Activated CD4-positive, alpha-beta T cell treated with anti-CD3 and anti-CD28 coated beads, Interleukin-2, amount 10 ng/mL, durations not matched to agents 24 days and 14 days (primary cell): ENCODE measurements at regions of chr15 and their contacts with region 1.

Region 1: DNA sequence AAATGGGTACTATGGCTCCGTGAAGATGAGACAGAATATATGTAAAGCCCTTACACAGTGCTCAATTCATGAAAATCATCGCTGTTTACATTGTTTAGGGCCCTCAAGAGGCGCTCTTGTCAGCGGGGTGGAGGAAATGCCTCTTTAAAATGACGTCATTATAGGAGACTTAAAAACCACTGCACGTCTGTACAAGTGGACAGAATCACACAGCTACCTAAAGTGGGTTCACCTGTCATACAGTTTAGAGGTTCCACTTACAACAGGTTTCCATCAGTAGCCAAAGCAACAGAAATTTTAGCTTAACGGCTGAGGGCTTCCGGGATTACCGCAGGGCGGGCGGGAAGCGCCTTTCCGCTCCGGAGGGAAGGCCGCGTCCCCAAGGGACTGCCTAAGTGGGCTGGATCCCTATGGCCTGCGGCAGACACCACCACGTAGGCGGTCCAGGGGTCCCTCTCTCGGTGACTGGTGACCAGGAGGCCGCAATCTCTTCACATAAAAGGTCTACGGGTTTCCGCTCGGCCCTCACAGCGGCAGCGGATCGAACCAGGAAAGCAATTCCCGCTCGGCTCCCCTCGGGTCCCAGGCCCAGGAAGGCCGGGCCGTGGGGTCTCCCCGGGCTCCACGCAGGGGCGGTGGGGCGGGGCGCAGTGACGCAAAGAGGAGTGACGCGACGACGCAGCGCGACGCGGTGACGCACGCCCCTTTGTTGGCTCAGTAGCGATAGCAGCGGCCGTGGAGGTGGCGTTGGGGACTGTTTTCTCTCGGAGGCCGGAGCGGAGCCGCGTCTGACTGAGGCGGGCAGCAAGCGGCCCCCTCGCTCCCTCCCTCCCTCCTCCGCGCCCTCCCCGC is at the start of gene ARIH1:
- DNase-seq: peak; percentile 99
- H3K4me3 Mint-ChIP-seq: peak within 1 kb of the TSS; percentile 91
- H3K27ac Mint-ChIP-seq: peak within 1 kb of the TSS; percentile 99
- H3K4me1 Mint-ChIP-seq: peaks cover 31% of the 10 kb centered on the region
- H3K27me3 Mint-ChIP-seq: no peaks in the 10 kb centered on the region
- total RNA-seq, gene ARIH1: 140 and 141 TPM in 2 replicates

Region 2: DNA sequence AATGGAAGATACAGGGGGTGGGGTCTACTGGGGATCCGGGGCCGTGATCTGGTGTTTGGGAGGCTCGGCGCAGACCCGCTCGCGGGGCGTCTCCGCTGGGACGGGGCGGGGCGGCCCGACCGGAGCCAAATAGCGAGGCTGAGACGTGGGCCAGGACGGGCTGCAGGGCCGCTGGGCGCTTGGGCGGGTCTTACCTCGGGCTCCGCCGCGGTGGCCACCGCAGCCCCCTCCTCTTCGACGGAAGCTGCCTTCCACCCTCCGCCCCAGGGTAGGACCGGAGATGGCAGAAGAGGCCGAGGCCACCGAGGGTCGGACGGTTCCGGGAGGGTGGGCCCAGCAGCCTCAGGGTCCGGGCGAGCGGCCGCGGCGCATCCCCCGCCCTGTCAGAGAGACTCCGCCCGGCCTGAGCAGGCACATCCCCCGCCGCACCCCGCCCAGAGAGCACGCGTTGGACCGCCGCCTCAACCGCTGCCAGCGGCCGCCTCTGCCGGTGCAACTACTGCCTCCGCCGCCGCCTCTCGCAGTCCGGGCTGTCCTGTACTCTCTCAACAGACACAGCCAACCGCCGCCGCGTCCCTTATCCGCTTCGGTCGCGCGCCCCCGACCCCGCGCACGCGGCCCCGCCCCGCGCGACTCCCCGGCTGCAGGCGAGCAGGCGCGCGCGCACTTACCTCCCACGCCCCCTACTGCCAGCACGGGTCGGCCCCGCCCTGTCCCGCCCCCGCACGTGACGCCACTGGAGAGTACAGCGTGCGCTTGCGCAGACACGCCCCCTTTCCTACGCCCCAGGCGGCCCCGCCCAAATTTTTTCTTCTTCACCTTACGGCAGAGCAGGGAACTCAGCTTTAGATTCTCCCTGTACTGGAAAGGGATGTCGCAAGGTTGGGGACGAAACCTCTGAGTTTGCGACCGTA is 356.1 kb before region 1 on chr15 and contains the start of gene MYO9A:
- intact Hi-C with region 1: loop called (anchors 10 kb)
- DNase-seq: peak; percentile 98
- H3K4me3 Mint-ChIP-seq: peak within 1 kb of the TSS; percentile 95
- H3K27ac Mint-ChIP-seq: peak within 1 kb of the TSS; percentile 99
- H3K4me1 Mint-ChIP-seq: peaks cover 26% of the 10 kb centered on the region
- H3K27me3 Mint-ChIP-seq: peaks cover 17% of the 10 kb centered on the region
- total RNA-seq, gene MYO9A: 19.4 and 21.3 TPM in 2 replicates

Region 3: DNA sequence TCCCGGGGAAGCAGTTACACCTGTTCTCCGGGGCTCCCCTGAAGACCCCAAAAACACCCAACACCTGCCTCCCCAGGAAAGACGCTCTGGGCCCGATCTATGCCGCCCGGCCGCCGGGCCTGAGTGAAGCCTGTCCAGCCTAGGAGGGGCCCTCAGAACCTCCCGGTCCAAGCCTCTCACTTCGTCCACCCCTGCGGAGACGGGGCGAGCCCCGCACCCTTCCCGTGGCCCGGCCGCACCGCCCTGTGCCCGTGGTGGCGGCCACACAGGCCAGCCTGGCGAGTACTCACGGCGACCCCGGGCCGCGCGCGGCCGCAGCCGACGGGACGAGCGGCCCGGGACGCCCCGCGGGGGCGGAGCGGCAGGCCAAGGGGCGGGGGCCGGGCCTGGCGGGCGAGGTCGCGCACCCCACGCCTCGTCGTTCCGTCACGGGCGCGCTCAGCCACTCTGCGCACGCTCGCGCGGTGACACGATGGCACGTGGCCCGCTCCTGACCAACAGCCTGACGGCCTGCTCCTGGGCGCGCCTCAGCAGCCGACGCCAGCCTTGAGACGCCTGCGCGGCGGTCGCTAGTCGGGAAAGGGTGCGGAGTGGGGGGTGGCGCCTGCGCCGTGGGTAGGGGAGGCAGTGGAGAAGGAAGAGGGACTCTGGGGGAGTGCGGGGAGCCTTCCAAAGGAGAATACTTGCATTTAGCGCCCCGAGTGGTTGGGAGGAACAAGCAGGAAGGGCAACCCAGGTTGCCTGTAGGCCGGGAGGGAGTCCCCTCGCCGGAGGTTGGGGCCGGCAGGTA is 201.4 kb before region 1 on chr15 and contains the start of gene PARP6:
- intact Hi-C with region 1: loop called (anchors 1 kb)
- DNase-seq: peak; percentile 100
- H3K4me3 Mint-ChIP-seq: peak within 1 kb of the TSS; percentile 94
- H3K27ac Mint-ChIP-seq: peak within 1 kb of the TSS; percentile 88
- H3K4me1 Mint-ChIP-seq: peaks cover 32% of the 10 kb centered on the region
- H3K27me3 Mint-ChIP-seq: peaks cover 3% of the 10 kb centered on the region
- total RNA-seq, gene PARP6: 69.7 and 78.6 TPM in 2 replicates

Region 4: GRCh38 chr15:72375847-72376581 is 97.8 kb before region 1 on chr15 and contains the start of gene HEXA:
- intact Hi-C with region 1: loop called (anchors 1 kb)
- DNase-seq: peak; percentile 99
- H3K4me3 Mint-ChIP-seq: peak within 1 kb of the TSS; percentile 90
- H3K27ac Mint-ChIP-seq: peak within 1 kb of the TSS; percentile 91
- H3K4me1 Mint-ChIP-seq: peaks cover 31% of the 10 kb centered on the region
- H3K27me3 Mint-ChIP-seq: no peaks in the 10 kb centered on the region
- total RNA-seq, gene HEXA: 54.3 and 59.4 TPM in 2 replicates

Region 5: DNA sequence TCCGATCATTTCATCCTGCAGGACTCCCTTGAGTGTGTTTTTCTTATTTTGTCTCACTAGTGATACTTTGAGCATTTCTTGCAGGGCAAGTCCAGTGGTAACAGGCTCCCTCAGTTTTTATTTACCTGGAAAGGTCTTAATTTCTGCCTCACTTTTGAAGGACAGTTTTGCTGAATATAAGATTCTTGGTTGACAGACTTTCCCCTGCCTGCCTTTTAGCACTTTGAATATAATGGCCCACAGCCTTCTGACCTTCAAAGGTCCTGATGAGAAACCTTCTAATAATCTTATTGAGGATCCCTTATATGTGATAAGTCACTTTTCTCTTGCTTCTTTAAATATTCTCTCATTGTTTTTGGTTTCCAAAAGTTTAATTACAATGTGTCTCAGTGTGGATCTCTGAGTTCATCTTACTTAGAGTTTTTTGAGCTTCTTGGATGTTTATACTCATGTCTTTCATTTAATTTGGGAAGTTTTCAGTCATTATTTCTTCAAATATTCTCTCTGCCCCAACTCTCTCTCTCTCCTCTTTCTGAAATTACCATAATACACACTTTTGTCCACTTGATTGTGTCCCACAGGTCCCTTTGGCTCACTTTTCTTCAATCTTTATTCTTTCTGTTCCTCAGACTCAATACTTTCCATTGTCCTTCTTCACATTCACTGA is 36.1 kb before region 1 on chr15:
- intact Hi-C with region 1: no loop called
- DNase-seq: no peak
- H3K4me3 Mint-ChIP-seq: no peak overlapping the region
- H3K27ac Mint-ChIP-seq: no peak overlapping the region
- H3K4me1 Mint-ChIP-seq: no peaks in the 10 kb centered on the region
- H3K27me3 Mint-ChIP-seq: peaks cover 26% of the 10 kb centered on the region

Region 6: DNA sequence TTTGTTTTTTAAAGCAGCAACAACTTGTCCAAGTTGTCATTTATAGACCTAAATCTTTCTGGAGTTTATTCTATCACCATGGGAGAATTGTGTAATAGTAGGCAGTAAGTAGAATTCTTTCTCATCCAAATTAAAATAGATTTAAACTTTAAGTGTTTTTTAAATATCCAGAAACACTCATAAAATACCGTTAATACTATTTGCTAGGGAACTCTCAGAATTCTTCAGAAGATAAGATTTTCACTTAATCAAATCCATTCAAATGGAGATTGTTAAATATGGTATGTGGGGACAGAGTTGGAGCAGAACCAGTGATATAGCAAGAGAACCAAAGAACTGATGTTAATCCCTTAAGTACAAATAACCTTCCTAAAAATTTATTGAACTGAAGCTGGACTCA is 71.3 kb after region 1 on chr15:
- intact Hi-C with region 1: no loop called
- DNase-seq: no peak
- H3K4me3 Mint-ChIP-seq: no peak overlapping the region
- H3K27ac Mint-ChIP-seq: no peak overlapping the region
- H3K4me1 Mint-ChIP-seq: no peaks in the 10 kb centered on the region
- H3K27me3 Mint-ChIP-seq: no peaks in the 10 kb centered on the region

Region 7: GRCh38 chr15:73991726-73992593 is 1518.1 kb after region 1 on chr15 and contains the start of gene STOML1:
- intact Hi-C with region 1: loop called (anchors 5 kb)
- DNase-seq: peak; percentile 100
- H3K4me3 Mint-ChIP-seq: peak within 1 kb of the TSS; percentile 85
- H3K27ac Mint-ChIP-seq: peak within 1 kb of the TSS; percentile 86
- H3K4me1 Mint-ChIP-seq: peaks cover 50% of the 10 kb centered on the region
- H3K27me3 Mint-ChIP-seq: no peaks in the 10 kb centered on the region
- total RNA-seq, gene STOML1: 10.3 and 10.6 TPM in 2 replicates